ENCODE measurements at regions of chrX and their contacts with region 1.

Region 1: GRCh38 chrX:41720125-41720779 is 3.7 kb upstream of the GPR82 start:
- DNase-seq: peak; percentile 51
- ATAC-seq: peak; percentile 93
- H3K4me3 ChIP-seq: no peak overlapping the region
- H3K27ac ChIP-seq: peak overlapping the region; percentile 24; the same call in 1 of the 2 replicates
- H3K4me1 ChIP-seq: peaks cover 28% of the 10 kb centered on the region
- H3K27me3 ChIP-seq: no peaks in the 10 kb centered on the region
- CTCF ChIP-seq: no peak
- EP300 ChIP-seq: no peak
- POLR2A ChIP-seq: no peak
- RAD21 ChIP-seq: no peak

Region 2: DNA sequence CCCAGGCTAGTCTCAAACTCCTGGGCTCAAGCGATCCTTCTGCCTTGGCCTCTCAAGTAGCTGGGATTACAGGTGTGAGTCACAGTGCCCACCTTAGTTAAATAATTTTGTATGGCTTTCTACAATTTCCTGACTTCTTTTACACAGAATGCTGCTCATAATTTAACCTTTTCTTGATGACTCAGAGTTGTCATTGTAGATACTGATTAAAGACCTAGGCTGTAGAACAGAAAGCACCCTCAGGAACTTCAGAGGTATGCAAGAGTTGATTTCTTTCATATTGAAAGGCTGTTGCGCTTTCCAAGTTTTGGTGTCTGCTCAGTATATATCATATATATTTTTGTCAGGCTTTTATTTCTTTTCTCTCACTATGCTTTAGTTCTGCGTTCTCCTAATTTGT is 52.6 kb before region 1 on chrX:
- CTCF ChIA-PET with region 1: no interaction called
- POLR2A ChIA-PET with region 1: interaction called, 3 read pairs
- RAD21 ChIA-PET with region 1: no interaction called
- SMC1A ChIA-PET with region 1: interaction called, 3 read pairs
- in situ Hi-C with region 1: no loop called
- intact Hi-C with region 1: loop called (anchors 5 kb)
- DNase-seq: no peak
- ATAC-seq: no peak
- H3K4me3 ChIP-seq: no peak overlapping the region
- H3K27ac ChIP-seq: no peak overlapping the region
- H3K4me1 ChIP-seq: 0 out of 2 replicates have a peak, but pooled peaks cover 4% of the 10 kb centered on the region
- H3K27me3 ChIP-seq: no peaks in the 10 kb centered on the region
- CTCF ChIP-seq: no peak
- EP300 ChIP-seq: no peak
- POLR2A ChIP-seq: no peak
- RAD21 ChIP-seq: no peak

Region 3: GRCh38 chrX:41705680-41706374 is 14.4 kb before region 1 on chrX:
- CTCF ChIA-PET with region 1: interaction called, 8 read pairs
- POLR2A ChIA-PET with region 1: interaction called, 3 read pairs
- RAD21 ChIA-PET with region 1: interaction called, 4 read pairs
- SMC1A ChIA-PET with region 1: interaction called, 8 read pairs
- in situ Hi-C with region 1: no loop called
- intact Hi-C with region 1: loop called (anchors 2 kb)
- DNase-seq: peak; percentile 62
- ATAC-seq: peak; percentile 88
- H3K4me3 ChIP-seq: no peak overlapping the region
- H3K27ac ChIP-seq: peak overlapping the region; percentile 52
- H3K4me1 ChIP-seq: peaks cover 26% of the 10 kb centered on the region
- H3K27me3 ChIP-seq: no peaks in the 10 kb centered on the region
- CTCF ChIP-seq: no peak
- EP300 ChIP-seq: peak; percentile 43 to 49; a peak in 2 of 4 replicates
- POLR2A ChIP-seq: no peak
- RAD21 ChIP-seq: no peak

Region 4: GRCh38 chrX:41781502-41781901 is 61.2 kb after region 1 on chrX:
- CTCF ChIA-PET with region 1: no interaction called
- POLR2A ChIA-PET with region 1: no interaction called
- RAD21 ChIA-PET with region 1: no interaction called
- SMC1A ChIA-PET with region 1: no interaction called
- in situ Hi-C with region 1: no loop called
- intact Hi-C with region 1: no loop called
- DNase-seq: no peak
- ATAC-seq: peak; percentile 93
- H3K4me3 ChIP-seq: no peak overlapping the region
- H3K27ac ChIP-seq: no peak overlapping the region
- H3K4me1 ChIP-seq: no peaks in the 10 kb centered on the region
- H3K27me3 ChIP-seq: no peaks in the 10 kb centered on the region
- CTCF ChIP-seq: peak; percentile 67 to 80 (median 71)
- EP300 ChIP-seq: no peak
- POLR2A ChIP-seq: no peak
- RAD21 ChIP-seq: peak; percentile 80